Mammary epithelial cell (primary cell): ENCODE measurements at regions of chr12 and their contacts with region 1.

Region 1: DNA sequence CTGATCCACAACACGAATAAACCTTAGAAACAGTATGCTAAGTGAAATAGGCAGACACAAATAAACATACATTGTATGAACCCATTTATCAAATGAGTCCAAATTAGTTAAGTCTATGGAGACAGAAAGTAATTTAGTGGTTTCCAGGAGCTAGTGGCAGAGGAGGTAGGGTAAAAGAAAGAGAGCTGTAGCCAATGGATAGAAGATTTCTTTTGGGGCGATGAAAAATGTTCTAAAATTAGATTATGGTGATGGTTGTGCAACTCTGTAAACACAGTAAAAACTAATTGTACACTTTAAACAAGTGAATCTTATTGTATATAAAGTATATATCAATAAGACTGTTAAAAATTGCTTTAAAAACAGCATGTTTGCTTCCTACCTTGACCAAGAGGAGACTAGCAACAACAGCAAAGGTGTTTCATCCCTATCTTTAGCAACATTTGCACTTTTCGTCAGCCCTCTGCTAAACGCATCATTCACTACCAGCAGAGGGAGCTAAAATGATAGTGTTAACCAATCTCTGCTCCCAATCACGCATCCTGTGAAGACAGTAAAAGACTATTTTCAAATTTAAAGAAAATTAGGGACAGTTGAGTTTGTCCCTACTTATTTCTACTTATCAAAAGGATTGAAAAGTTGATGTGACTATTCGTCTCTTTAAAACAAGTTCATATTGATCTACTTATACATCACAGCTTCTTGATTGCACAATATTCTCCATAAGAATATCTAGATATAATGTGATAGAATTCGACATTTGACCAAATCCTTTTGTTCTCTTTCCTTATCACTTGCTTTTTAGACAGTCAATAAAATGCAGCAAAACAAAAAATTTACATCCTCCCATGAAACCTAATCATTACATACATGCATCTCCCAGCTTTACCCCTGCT is 24.0 kb upstream of the LGR5 start:
- DNase-seq: peak; percentile 34
- H3K4me3 ChIP-seq: no peak overlapping the region
- H3K27ac ChIP-seq: no peak overlapping the region
- H3K4me1 ChIP-seq: no peaks in the 10 kb centered on the region
- H3K27me3 ChIP-seq: no peaks in the 10 kb centered on the region
- CTCF ChIP-seq: peak; percentile 81

Region 2: GRCh38 chr12:71303199-71303598 is 112.4 kb before region 1 on chr12:
- CTCF ChIA-PET with region 1: no interaction called
- dilution Hi-C with region 1: no loop called
- in situ Hi-C with region 1: no loop called
- intact Hi-C with region 1: no loop called
- DNase-seq: peak; percentile 89
- H3K4me3 ChIP-seq: no peak overlapping the region
- H3K27ac ChIP-seq: no peak overlapping the region
- H3K4me1 ChIP-seq: no peaks in the 10 kb centered on the region
- H3K27me3 ChIP-seq: no peaks in the 10 kb centered on the region
- CTCF ChIP-seq: no peak

Region 3: GRCh38 chr12:71476513-71476912 is 60.9 kb after region 1 on chr12:
- CTCF ChIA-PET with region 1: no interaction called
- dilution Hi-C with region 1: no loop called
- in situ Hi-C with region 1: no loop called
- intact Hi-C with region 1: no loop called
- DNase-seq: peak; percentile 42
- H3K4me3 ChIP-seq: no peak overlapping the region
- H3K27ac ChIP-seq: no peak overlapping the region
- H3K4me1 ChIP-seq: no peaks in the 10 kb centered on the region
- H3K27me3 ChIP-seq: no peaks in the 10 kb centered on the region
- CTCF ChIP-seq: no peak

Region 4: GRCh38 chr12:71499834-71500233 is 84.2 kb after region 1 on chr12:
- CTCF ChIA-PET with region 1: no interaction called
- dilution Hi-C with region 1: no loop called
- in situ Hi-C with region 1: no loop called
- intact Hi-C with region 1: no loop called
- DNase-seq: no peak
- H3K4me3 ChIP-seq: no peak overlapping the region
- H3K27ac ChIP-seq: no peak overlapping the region
- H3K4me1 ChIP-seq: no peaks in the 10 kb centered on the region
- H3K27me3 ChIP-seq: no peaks in the 10 kb centered on the region
- CTCF ChIP-seq: no peak

Region 5: DNA sequence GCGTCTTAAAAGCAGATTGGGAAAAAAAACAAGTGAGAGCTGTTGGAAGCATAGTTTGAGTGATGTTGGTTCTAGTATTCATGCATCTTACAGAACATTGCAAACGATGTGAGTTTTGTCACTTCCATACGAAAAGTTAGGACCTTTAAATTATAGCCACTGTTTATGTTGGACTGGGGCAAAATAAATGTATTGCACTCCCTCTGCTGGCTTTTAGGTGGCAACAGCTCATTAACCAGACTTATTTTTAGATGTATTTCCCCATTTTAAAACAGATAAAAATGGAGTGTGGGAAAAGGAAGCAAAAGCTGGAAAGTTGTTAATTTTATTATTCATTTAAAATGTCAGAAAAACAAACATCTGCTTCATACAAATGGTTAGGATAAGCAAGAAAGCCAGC is 135.9 kb after region 1 on chr12:
- CTCF ChIA-PET with region 1: no interaction called
- dilution Hi-C with region 1: no loop called
- in situ Hi-C with region 1: no loop called
- intact Hi-C with region 1: loop called (anchors 1 kb)
- DNase-seq: no peak
- H3K4me3 ChIP-seq: no peak overlapping the region
- H3K27ac ChIP-seq: no peak overlapping the region
- H3K4me1 ChIP-seq: peaks cover 3% of the 10 kb centered on the region
- H3K27me3 ChIP-seq: no peaks in the 10 kb centered on the region
- CTCF ChIP-seq: peak; percentile 24 to 41

Region 6: GRCh38 chr12:71602745-71603577 is 187.4 kb after region 1 on chr12:
- CTCF ChIA-PET with region 1: no interaction called
- dilution Hi-C with region 1: no loop called
- in situ Hi-C with region 1: loop called in 1 of 2 experiments (anchors 25 kb)
- intact Hi-C with region 1: loop called (anchors 10 kb)
- DNase-seq: no peak
- H3K4me3 ChIP-seq: no peak overlapping the region
- H3K27ac ChIP-seq: no peak overlapping the region
- H3K4me1 ChIP-seq: no peaks in the 10 kb centered on the region
- H3K27me3 ChIP-seq: no peaks in the 10 kb centered on the region
- CTCF ChIP-seq: no peak

Region 7: DNA sequence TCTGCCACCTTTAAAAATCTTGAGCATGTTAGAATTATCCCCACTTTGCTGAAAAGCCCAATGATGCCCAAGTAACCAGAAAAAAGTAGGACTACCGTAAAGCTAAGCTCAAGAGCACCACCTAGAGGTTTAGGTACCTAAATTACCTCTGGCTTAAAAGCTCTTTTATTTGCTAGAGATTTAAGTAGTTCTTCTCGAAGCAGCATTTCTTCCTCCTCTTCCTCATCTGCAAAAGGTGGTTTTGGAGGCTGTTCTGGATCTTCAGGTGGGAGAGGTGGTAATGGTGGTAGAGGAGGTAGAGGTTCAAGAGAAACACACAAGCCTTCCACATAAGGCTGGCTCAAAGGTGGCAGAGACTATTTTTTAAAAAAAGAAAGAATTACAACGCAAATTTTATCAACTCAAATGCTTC is 221.1 kb after region 1 on chr12:
- CTCF ChIA-PET with region 1: no interaction called
- dilution Hi-C with region 1: no loop called
- in situ Hi-C with region 1: no loop called
- intact Hi-C with region 1: loop called (anchors 1 kb)
- DNase-seq: peak; percentile 46
- H3K4me3 ChIP-seq: no peak overlapping the region
- H3K27ac ChIP-seq: no peak overlapping the region
- H3K4me1 ChIP-seq: no peaks in the 10 kb centered on the region
- H3K27me3 ChIP-seq: no peaks in the 10 kb centered on the region
- CTCF ChIP-seq: peak; percentile 77 to 81